GM12878 (cell line): ENCODE measurements at regions of chr3 and their contacts with region 1.

Region 1: GRCh38 chr3:52770496-52771333 is at the start of gene NEK4:
- DNase-seq: peak; percentile 73
- ATAC-seq: peak; percentile 99
- H3K4me3 ChIP-seq: peak within 1 kb of the TSS; percentile 73
- H3K27ac ChIP-seq: peak within 1 kb of the TSS; percentile 83
- H3K4me1 ChIP-seq: peaks cover 4% of the 10 kb centered on the region
- H3K27me3 ChIP-seq: no peaks in the 10 kb centered on the region
- CTCF ChIP-seq: no peak
- EP300 ChIP-seq: 0 out of 4 replicates have a peak, but pooled peaks of 1 of the 2 experiments have one; percentile 8
- POLR2A ChIP-seq: peak; percentile 98
- RAD21 ChIP-seq: no peak
- polyA plus RNA-seq, gene NEK4: 7.0 to 8.8 TPM

Region 2: DNA sequence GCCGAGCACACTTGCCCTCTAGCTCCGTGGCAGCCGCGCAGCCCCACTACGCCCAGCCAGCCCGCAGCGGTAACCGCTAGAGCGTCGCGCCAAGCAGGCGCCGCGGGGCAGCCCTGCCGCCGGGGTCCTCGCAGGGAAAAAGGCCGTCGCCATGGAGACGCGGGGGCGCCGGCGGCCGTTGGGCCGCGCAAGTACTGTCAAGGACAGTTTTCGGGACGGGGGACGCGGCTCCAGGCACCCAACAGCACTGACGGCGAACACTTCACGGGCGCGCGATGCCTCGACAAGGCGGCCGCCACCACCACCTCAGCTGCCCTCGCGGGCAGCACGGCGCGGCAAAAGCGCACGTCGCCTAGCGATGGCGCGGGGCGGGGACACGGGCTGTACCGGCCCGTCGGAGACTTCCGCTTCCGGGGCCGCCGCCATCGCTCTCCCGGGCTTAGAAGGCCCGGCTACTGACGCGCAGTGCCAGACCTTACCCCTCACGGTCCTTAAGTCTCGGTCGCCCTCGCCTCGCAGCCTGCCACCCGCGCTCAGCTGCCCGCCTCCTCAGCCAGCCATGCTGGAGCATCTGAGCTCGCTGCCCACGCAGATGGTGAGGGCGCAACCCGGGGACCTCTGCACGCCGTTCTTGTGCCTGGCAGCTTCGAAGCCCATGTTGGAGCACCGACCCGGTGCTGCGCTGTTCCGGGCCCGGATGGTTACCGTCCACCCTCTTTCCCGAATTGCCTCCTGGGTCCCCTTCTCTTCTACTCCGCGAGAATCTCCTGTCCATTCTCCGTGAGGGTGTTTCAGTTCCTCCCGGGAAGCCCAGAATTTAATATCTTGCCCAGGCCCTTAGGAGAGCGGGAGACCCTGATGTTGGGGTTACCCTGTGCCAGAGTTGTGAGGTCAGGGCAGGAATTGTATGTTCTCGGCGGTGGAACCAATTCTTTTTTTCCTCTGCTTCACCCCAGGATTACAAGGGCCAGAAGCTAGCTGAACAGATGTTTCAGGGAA is 64.7 kb before region 1 on chr3 and contains the starts of genes GLT8D1 and SPCS1:
- CTCF ChIA-PET with region 1: no interaction called
- POLR2A ChIA-PET with region 1: interaction called, 7 read pairs
- RAD21 ChIA-PET with region 1: interaction called, 8 read pairs
- SMC1A ChIA-PET with region 1: no interaction called
- in situ Hi-C with region 1: no loop called
- intact Hi-C with region 1: loop called (anchors 2 kb)
- DNase-seq: no peak
- ATAC-seq: peak; percentile 92
- H3K4me3 ChIP-seq: peak within 1 kb of the TSS; percentile 90
- H3K27ac ChIP-seq: peak within 1 kb of the TSS; percentile 75
- H3K4me1 ChIP-seq: peaks cover 30% of the 10 kb centered on the region
- H3K27me3 ChIP-seq: no peaks in the 10 kb centered on the region
- CTCF ChIP-seq: no peak
- EP300 ChIP-seq: no peak
- POLR2A ChIP-seq: peak; percentile 93
- RAD21 ChIP-seq: no peak
- polyA plus RNA-seq, gene GLT8D1: 25.3 to 32.6 TPM
- polyA plus RNA-seq, gene SPCS1: 814 to 994 TPM